Endothelial cell of umbilical vein (primary cell): ENCODE measurements at regions of chr4 and their contacts with region 1.

Region 1: GRCh38 chr4:165112368-165113139 is at the start of gene TMEM192:
- DNase-seq: peak; percentile 97
- H3K4me3 ChIP-seq: peak within 1 kb of the TSS; percentile 85 to 95 (median 87)
- H3K27ac ChIP-seq: peak within 1 kb of the TSS; percentile 60
- H3K4me1 ChIP-seq: peaks cover 8% of the 10 kb centered on the region
- H3K27me3 ChIP-seq: no peaks in the 10 kb centered on the region
- CTCF ChIP-seq: peak; percentile 33 to 58
- POLR2A ChIP-seq: peak; percentile 57
- total RNA-seq, gene TMEM192: 13.0 and 14.5 TPM in 2 replicates

Region 2: DNA sequence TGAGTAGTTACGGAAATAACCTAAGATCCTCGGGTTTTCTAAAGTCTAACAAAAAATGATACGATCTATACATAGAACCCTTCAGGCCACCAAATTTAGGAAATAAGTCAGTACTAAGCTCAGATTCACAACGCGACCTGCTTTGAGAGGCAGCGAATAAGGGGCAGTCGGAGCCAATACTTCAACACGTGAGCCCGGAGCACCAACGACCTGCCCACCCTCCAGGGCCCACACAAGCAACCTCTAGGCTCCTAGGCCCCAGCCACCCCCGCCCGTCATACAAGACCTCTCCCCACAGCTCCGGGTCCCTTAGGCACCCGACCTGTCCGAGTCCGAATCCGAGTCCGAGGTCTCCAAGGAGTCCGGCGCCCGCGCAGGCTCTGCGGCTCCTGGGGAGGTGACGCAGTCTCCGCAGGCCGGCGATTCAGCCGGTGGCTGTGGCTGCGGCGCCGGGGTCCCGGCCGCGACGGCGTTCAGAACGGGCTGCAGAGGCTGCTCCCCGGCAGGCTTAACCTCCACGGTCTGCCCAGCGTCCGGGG is 1946.4 kb before region 1 on chr4:
- CTCF ChIA-PET with region 1: no interaction called
- POLR2A ChIA-PET with region 1: no interaction called
- dilution Hi-C with region 1: no loop called
- intact Hi-C with region 1: loop called (anchors 5 kb)
- DNase-seq: peak; percentile 73
- H3K4me3 ChIP-seq: peak overlapping the region; percentile 97
- H3K27ac ChIP-seq: peak overlapping the region; percentile 83
- H3K4me1 ChIP-seq: peaks cover 28% of the 10 kb centered on the region
- H3K27me3 ChIP-seq: no peaks in the 10 kb centered on the region
- CTCF ChIP-seq: no peak
- POLR2A ChIP-seq: no peak

Region 3: DNA sequence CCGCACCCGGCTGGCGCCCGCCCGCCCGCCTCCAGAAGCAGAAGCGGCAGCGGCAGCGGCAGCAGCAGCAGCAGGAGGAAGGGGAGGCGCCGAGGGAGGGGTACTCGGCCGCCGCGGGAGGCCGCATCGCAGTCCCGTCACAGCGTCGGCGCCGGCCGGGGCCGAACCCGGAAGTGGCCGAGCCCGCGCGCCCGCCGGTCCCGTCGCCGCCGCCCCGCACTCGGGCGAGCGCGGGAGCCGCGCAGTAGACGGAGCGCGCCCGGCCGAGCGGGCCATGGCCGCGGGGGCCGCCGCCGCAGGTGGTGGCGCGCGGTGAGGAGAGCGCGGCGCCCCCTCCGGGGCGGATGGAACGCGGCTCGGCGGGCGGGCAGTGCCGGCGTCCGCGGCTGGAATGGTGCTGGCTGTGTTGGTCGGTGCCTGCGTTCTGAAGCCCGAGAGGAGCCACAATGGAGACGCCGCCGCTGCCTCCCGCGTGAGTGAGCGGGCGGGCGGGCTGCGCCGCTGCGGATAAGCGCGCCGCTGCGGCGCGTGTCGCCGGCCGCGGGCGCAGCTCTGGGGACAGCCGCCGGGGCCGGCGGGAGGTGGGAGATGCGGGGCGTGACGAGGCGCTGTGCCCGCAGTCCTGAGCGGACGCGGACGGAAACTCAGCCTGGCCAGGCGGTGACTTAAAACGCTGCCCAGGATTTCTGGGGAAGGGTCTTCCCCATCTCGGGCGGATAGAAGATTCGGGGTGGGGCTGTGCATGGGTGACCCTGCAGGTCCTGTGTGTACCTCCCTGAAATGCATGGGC is 95.1 kb after region 1 on chr4 and contains the start of gene KLHL2:
- CTCF ChIA-PET with region 1: interaction called, 4 read pairs
- POLR2A ChIA-PET with region 1: no interaction called
- dilution Hi-C with region 1: no loop called
- intact Hi-C with region 1: loop called (anchors 5 kb)
- DNase-seq: peak; percentile 80
- H3K4me3 ChIP-seq: peak within 1 kb of the TSS; percentile 95 to 98 (median 97)
- H3K27ac ChIP-seq: peak within 1 kb of the TSS; percentile 58
- H3K4me1 ChIP-seq: peaks cover 22% of the 10 kb centered on the region
- H3K27me3 ChIP-seq: no peaks in the 10 kb centered on the region
- CTCF ChIP-seq: no peak
- POLR2A ChIP-seq: peak; percentile 73
- total RNA-seq, gene KLHL2: 22.1 and 22.9 TPM in 2 replicates

Region 4: GRCh38 chr4:165343353-165344191 is 231.0 kb after region 1 on chr4:
- CTCF ChIA-PET with region 1: interaction called, 48 read pairs
- POLR2A ChIA-PET with region 1: no interaction called
- dilution Hi-C with region 1: no loop called
- intact Hi-C with region 1: no loop called
- DNase-seq: peak; percentile 53
- H3K4me3 ChIP-seq: no peak overlapping the region
- H3K27ac ChIP-seq: no peak overlapping the region
- H3K4me1 ChIP-seq: no peaks in the 10 kb centered on the region
- H3K27me3 ChIP-seq: peaks cover 0 to under 1% of the 10 kb centered on the region in 2 experiments
- CTCF ChIP-seq: peak in 1 of 2 donors; percentile 20
- POLR2A ChIP-seq: no peak

Region 5: GRCh38 chr4:165464813-165465381 is 352.3 kb after region 1 on chr4:
- CTCF ChIA-PET with region 1: interaction called, 10 read pairs
- POLR2A ChIA-PET with region 1: no interaction called
- dilution Hi-C with region 1: no loop called
- intact Hi-C with region 1: loop called (anchors 1 kb)
- DNase-seq: peak; percentile 52
- H3K4me3 ChIP-seq: no peak overlapping the region
- H3K27ac ChIP-seq: no peak overlapping the region
- H3K4me1 ChIP-seq: no peaks in the 10 kb centered on the region
- H3K27me3 ChIP-seq: no peaks in the 10 kb centered on the region
- CTCF ChIP-seq: peak; percentile 54 to 61
- POLR2A ChIP-seq: no peak